ENCODE measurements at regions of chr19 and their contacts with region 1.

Region 1: DNA sequence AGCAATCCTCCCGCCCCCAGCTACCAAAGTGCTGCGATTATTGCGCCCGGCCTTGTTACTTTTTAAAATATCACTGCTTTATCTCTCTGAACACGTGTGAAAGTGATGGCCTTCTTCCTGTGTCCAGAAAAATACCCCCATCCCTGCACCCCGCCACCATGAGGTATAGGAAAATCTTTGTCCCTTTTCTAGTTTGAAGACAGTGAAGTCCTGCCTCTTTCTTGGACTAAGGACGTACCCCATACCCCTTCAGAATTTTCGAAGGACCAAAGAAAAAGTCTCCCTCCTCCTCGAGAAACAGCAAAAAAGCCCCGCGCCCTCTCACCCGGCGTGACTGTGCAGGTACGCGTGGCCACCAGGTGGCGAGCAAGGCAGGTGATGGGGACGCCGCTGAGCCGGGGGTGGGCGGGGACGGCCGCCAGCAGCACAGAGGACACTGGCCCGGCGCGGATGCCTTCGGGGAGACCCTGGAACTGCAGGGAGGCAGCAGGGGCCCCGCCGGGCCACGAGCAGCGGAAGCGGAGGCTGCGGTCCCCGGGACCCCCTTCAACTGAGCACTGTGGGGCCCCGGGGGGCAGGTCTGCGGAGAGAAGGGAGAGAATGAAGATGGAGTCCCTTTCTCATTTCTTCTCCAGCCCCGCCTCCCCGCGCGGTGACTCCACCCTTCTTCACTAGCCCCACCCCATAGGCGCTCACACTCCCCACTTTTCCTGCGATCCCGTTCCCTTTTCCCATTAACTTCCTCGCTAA is 3.2 kb downstream of the VSIG10L start:
- DNase-seq: peak; percentile 83
- H3K4me3 Mint-ChIP-seq: peak overlapping the region; percentile 76
- H3K27ac Mint-ChIP-seq: peak overlapping the region; percentile 33
- H3K4me1 Mint-ChIP-seq: peaks cover 11% of the 10 kb centered on the region
- H3K27me3 Mint-ChIP-seq: no peaks in the 10 kb centered on the region
- CTCF ChIP-seq: peak; percentile 86

Region 2: GRCh38 chr19:51147663-51148062 is 191.1 kb before region 1 on chr19:
- CTCF ChIA-PET with region 1: no interaction called
- POLR2A ChIA-PET with region 1: no interaction called
- intact Hi-C with region 1: no loop called
- DNase-seq: no peak
- H3K4me3 Mint-ChIP-seq: no peak overlapping the region
- H3K27ac Mint-ChIP-seq: no peak overlapping the region
- H3K4me1 Mint-ChIP-seq: no peaks in the 10 kb centered on the region
- H3K27me3 Mint-ChIP-seq: no peaks in the 10 kb centered on the region
- CTCF ChIP-seq: no peak

Region 3: GRCh38 chr19:51292971-51293370 is 45.8 kb before region 1 on chr19:
- CTCF ChIA-PET with region 1: no interaction called
- POLR2A ChIA-PET with region 1: no interaction called
- intact Hi-C with region 1: no loop called
- DNase-seq: no peak
- H3K4me3 Mint-ChIP-seq: no peak overlapping the region
- H3K27ac Mint-ChIP-seq: no peak overlapping the region
- H3K4me1 Mint-ChIP-seq: no peaks in the 10 kb centered on the region
- H3K27me3 Mint-ChIP-seq: no peaks in the 10 kb centered on the region
- CTCF ChIP-seq: no peak

Region 4: DNA sequence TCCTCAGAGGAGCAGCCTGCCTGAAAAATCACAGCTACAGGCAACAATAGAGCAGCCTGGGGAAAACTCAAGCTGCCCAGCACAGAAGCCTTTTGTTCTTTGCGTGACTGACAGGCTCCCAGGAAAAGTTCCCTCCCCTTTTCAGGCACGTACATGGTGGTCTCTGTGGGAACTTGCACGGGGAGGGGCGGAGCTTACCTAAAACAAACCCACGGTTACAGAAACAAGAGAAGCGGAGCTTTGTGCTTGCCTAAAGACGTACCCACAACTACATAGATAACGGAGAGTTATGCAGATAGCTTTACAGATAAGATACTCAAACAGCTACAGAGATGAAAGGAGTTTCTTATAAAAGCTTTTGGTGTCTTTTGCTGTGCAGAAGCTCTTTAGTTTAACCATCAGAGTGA is 16.0 kb after region 1 on chr19:
- CTCF ChIA-PET with region 1: interaction called, 13 read pairs
- POLR2A ChIA-PET with region 1: interaction called, 8 read pairs
- intact Hi-C with region 1: no loop called
- DNase-seq: no peak
- H3K4me3 Mint-ChIP-seq: no peak overlapping the region
- H3K27ac Mint-ChIP-seq: no peak overlapping the region
- H3K4me1 Mint-ChIP-seq: peaks cover 6% of the 10 kb centered on the region
- H3K27me3 Mint-ChIP-seq: no peaks in the 10 kb centered on the region
- CTCF ChIP-seq: no peak

Region 5: GRCh38 chr19:51367565-51368365 is 29.0 kb after region 1 on chr19:
- CTCF ChIA-PET with region 1: interaction called, 18 read pairs
- POLR2A ChIA-PET with region 1: interaction called, 20 read pairs
- intact Hi-C with region 1: loop called (anchors 1 kb)
- DNase-seq: peak; percentile 98
- H3K4me3 Mint-ChIP-seq: peak overlapping the region; percentile 96
- H3K27ac Mint-ChIP-seq: peak overlapping the region; percentile 90
- H3K4me1 Mint-ChIP-seq: peaks cover 26% of the 10 kb centered on the region
- H3K27me3 Mint-ChIP-seq: no peaks in the 10 kb centered on the region
- CTCF ChIP-seq: no peak

Region 6: GRCh38 chr19:51441410-51442390 is 103.0 kb after region 1 on chr19:
- CTCF ChIA-PET with region 1: interaction called, 4 read pairs
- POLR2A ChIA-PET with region 1: interaction called, 3 read pairs
- intact Hi-C with region 1: loop called (anchors 1 kb)
- DNase-seq: peak; percentile 16
- H3K4me3 Mint-ChIP-seq: no peak overlapping the region
- H3K27ac Mint-ChIP-seq: no peak overlapping the region
- H3K4me1 Mint-ChIP-seq: no peaks in the 10 kb centered on the region
- H3K27me3 Mint-ChIP-seq: peaks cover 26% of the 10 kb centered on the region
- CTCF ChIP-seq: no peak

Measured in MCF 10A (cell line).